Adrenal gland (tissue), 19 donors: ENCODE measurements at regions of chr10 and their contacts with region 1.

Region 1: GRCh38 chr10:110311357-110311949 is 6.7 kb upstream of the SMNDC1 start:
- DNase-seq: peak; percentile 36 to 77 (median 59)
- H3K4me3 ChIP-seq: no peak overlapping the region
- H3K27ac ChIP-seq: no peak overlapping the region
- H3K4me1 ChIP-seq: no peaks in the 10 kb centered on the region
- H3K27me3 ChIP-seq: peaks cover 3% of the 10 kb centered on the region
- CTCF ChIP-seq: peak; percentile 41 to 87 (median 80)
- POLR2A ChIP-seq: no peak

Region 2: GRCh38 chr10:109966961-109967738 is 344.3 kb before region 1 on chr10:
- intact Hi-C with region 1: no loop called
- DNase-seq: peak in 6 of 7 donors; percentile 30 to 80 (median 54)
- H3K4me3 ChIP-seq: no peak overlapping the region
- H3K27ac ChIP-seq: peak overlapping the region in 2 of 5 donors; percentile 46 to 70
- H3K4me1 ChIP-seq: peaks cover 0 to 24% of the 10 kb centered on the region in 2 donors
- H3K27me3 ChIP-seq: no peaks in the 10 kb centered on the region
- CTCF ChIP-seq: no peak
- POLR2A ChIP-seq: no peak

Region 3: GRCh38 chr10:110273474-110273873 is 38.0 kb before region 1 on chr10:
- intact Hi-C with region 1: no loop called
- DNase-seq: peak in 6 of 7 donors; percentile 55 to 83 (median 74)
- H3K4me3 ChIP-seq: no peak overlapping the region
- H3K27ac ChIP-seq: no peak overlapping the region
- H3K4me1 ChIP-seq: peaks cover 16 to 35% of the 10 kb centered on the region in 2 donors
- H3K27me3 ChIP-seq: no peaks in the 10 kb centered on the region
- CTCF ChIP-seq: no peak
- POLR2A ChIP-seq: no peak

Region 4: DNA sequence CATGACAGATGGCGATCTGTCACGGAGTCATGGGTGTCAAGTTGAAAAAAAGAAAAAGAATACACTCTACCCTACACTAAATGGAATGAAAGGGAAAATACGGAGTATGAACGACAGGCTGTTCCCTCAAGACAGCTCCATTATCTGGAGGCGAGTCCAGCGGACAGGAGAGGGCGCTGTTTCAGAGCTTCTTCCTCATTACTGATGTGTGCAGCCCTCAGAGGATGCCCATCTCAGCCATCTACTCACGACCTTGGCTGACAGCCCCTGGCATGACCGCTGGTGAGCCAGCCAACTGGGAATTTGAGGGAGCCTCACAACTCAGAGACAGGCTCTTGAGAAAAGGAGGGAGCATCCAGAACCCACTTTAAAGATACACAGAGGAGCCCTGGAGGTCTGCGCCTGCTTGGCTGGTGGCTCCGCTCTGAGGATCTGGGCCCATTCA is 42.9 kb after region 1 on chr10:
- intact Hi-C with region 1: loop called in 1 of 2 experiments (anchors 2 kb)
- DNase-seq: peak; percentile 84 to 97 (median 93)
- H3K4me3 ChIP-seq: no peak overlapping the region
- H3K27ac ChIP-seq: peak overlapping the region in 3 of 5 donors; percentile 13 to 76 (median 64)
- H3K4me1 ChIP-seq: peaks cover 0 to 18% of the 10 kb centered on the region in 2 donors
- H3K27me3 ChIP-seq: no peaks in the 10 kb centered on the region
- CTCF ChIP-seq: peak; percentile 75 to 95 (median 82)
- POLR2A ChIP-seq: no peak

Region 5: GRCh38 chr10:110547139-110547761 is 235.8 kb after region 1 on chr10:
- intact Hi-C with region 1: loop called (anchors 5 kb)
- DNase-seq: no peak
- H3K4me3 ChIP-seq: no peak overlapping the region
- H3K27ac ChIP-seq: no peak overlapping the region
- H3K4me1 ChIP-seq: no peaks in the 10 kb centered on the region
- H3K27me3 ChIP-seq: peaks cover 3% of the 10 kb centered on the region
- CTCF ChIP-seq: peak; percentile 79 to 90 (median 87)
- POLR2A ChIP-seq: no peak

Region 6: GRCh38 chr10:110553905-110554304 is 242.5 kb after region 1 on chr10:
- intact Hi-C with region 1: loop called (anchors 5 kb)
- DNase-seq: no peak
- H3K4me3 ChIP-seq: no peak overlapping the region
- H3K27ac ChIP-seq: no peak overlapping the region
- H3K4me1 ChIP-seq: no peaks in the 10 kb centered on the region
- H3K27me3 ChIP-seq: peaks cover 2% of the 10 kb centered on the region
- CTCF ChIP-seq: no peak
- POLR2A ChIP-seq: no peak